Activated naive CD4-positive, alpha-beta T cell treated with anti-CD3 and anti-CD28 coated beads for 36 hours (primary cell): ENCODE measurements at regions of chr1 and their contacts with region 1.

Region 1: DNA sequence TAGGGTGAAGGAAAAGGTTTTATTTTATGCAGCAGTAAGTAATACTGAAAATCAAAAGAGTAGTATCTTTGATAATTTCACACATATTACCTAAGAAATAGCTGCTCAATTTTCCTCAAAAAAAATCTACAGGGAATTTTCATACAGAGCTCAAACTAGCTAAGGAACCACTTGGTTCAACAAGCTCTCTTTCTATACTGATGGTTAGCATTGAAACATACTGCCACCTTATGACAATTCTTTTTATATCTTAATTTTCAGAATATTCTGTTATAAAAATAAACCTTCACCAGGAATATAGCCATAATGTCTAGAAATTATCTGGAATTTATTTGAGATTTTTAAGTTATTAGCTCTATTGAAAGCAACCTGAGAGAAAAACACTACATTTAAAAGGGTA is 142.1 kb downstream of the DPYD start:
- DNase-seq: no peak
- H3K4me3 Mint-ChIP-seq: no peak overlapping the region
- H3K27ac Mint-ChIP-seq: no peak overlapping the region
- H3K4me1 Mint-ChIP-seq: peaks cover 10% of the 10 kb centered on the region
- H3K27me3 Mint-ChIP-seq: no peaks in the 10 kb centered on the region

Region 2: GRCh38 chr1:97668945-97669344 is 109.8 kb before region 1 on chr1:
- CTCF ChIA-PET with region 1: no interaction called
- intact Hi-C with region 1: loop called (anchors 5 kb)
- DNase-seq: peak; percentile 22
- H3K4me3 Mint-ChIP-seq: no peak overlapping the region
- H3K27ac Mint-ChIP-seq: no peak overlapping the region
- H3K4me1 Mint-ChIP-seq: no peaks in the 10 kb centered on the region
- H3K27me3 Mint-ChIP-seq: no peaks in the 10 kb centered on the region

Region 3: GRCh38 chr1:97849345-97850340 is 70.9 kb after region 1 on chr1:
- CTCF ChIA-PET with region 1: no interaction called
- intact Hi-C with region 1: no loop called
- DNase-seq: no peak
- H3K4me3 Mint-ChIP-seq: peak overlapping the region; percentile 12
- H3K27ac Mint-ChIP-seq: no peak overlapping the region
- H3K4me1 Mint-ChIP-seq: peaks cover 24% of the 10 kb centered on the region
- H3K27me3 Mint-ChIP-seq: no peaks in the 10 kb centered on the region